ENCODE measurements at regions of chr14 and their contacts with region 1.

Region 1: GRCh38 chr14:20613094-20614037 is 22.2 kb upstream of the RNASE12 start:
- ATAC-seq: peak; percentile 76 to 87 (median 84)
- H3K4me3 ChIP-seq: peak overlapping the region; percentile 38 to 50 (median 46)
- H3K27ac ChIP-seq: no peak overlapping the region
- H3K4me1 ChIP-seq: peaks cover 0 to 6% of the 10 kb centered on the region in 2 donors

Region 2: GRCh38 chr14:20167091-20167490 is 446.3 kb before region 1 on chr14:
- in situ Hi-C with region 1: no loop called
- ATAC-seq: no peak
- H3K4me3 ChIP-seq: no peak overlapping the region
- H3K27ac ChIP-seq: no peak overlapping the region
- H3K4me1 ChIP-seq: no peaks in the 10 kb centered on the region

Region 3: GRCh38 chr14:20327005-20327869 is 286.1 kb before region 1 on chr14:
- in situ Hi-C with region 1: loop called in 5 of 9 experiments (anchors 10 to 25 kb)
- ATAC-seq: peak in 6 of 8 experiments; percentile 29 to 62 (median 41)
- H3K4me3 ChIP-seq: no peak overlapping the region
- H3K27ac ChIP-seq: no peak overlapping the region
- H3K4me1 ChIP-seq: peaks cover 0 to 7% of the 10 kb centered on the region in 2 donors